CD4-positive, alpha-beta memory T cell (primary cell): ENCODE measurements at regions of chr1 and their contacts with region 1.

Region 1: DNA sequence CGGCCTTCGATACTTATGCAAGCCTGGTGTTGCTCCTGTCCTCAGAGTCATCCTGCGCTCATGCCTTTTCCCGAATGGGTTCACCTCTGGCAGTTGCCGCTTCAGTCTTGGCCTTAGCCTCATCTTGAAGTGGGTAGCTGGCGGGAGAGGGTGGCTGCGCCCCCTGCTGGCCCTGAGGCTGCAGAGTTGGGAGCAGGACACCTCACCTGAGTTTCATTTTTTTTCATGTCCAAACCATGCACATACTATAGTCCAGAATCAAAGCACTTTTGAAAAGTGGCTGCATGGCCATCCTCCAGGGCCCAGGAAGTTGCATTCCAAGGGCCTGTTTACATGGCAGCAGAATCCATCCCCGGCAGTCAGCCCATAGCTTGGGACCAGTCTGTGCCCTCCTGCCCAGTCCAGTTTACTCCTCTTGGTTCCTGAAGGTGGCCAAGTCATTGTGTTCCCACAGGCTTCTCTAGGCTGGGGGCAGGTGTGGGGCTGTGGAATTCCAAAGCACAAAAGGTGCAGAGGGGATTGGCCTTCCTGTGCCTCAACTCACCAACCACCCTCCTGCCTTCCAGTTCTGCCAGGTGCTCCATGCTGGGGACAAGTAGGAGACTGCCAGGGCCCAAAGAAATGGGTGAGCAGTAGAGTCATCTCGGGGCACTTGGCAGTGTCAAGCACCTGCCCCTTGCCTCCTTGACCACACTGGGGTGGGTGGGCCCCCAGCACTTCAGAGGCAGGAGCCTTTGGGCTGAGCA is 44.0 kb downstream of the YARS1 start:
- DNase-seq: peak; percentile 67 to 72 (median 68)
- H3K4me3 ChIP-seq: no peak overlapping the region
- H3K4me3 Mint-ChIP-seq: peak overlapping the region in 1 of 8 donors; percentile 34
- H3K27ac ChIP-seq: no peak overlapping the region
- H3K27ac Mint-ChIP-seq: peak overlapping the region in 3 of 7 donors; percentile 21 to 64 (median 24)
- H3K4me1 ChIP-seq: peaks cover 9% of the 10 kb centered on the region
- H3K4me1 Mint-ChIP-seq: peaks cover 5 to 16% (median 8%) of the 10 kb centered on the region in 4 donors
- H3K27me3 ChIP-seq: no peaks in the 10 kb centered on the region
- H3K27me3 Mint-ChIP-seq: no peaks in the 10 kb centered on the region

Region 2: GRCh38 chr1:32521165-32521564 is 252.0 kb before region 1 on chr1:
- CTCF ChIA-PET with region 1: interaction called, 57 read pairs
- POLR2A ChIA-PET with region 1: interaction called, 7 read pairs
- intact Hi-C with region 1: no loop called
- DNase-seq: no peak
- H3K4me3 ChIP-seq: no peak overlapping the region
- H3K4me3 Mint-ChIP-seq: peak overlapping the region; percentile 55 to 82 (median 79)
- H3K27ac ChIP-seq: no peak overlapping the region
- H3K27ac Mint-ChIP-seq: no peak overlapping the region
- H3K4me1 ChIP-seq: no peaks in the 10 kb centered on the region
- H3K4me1 Mint-ChIP-seq: peaks cover 0 to 11% (median 1%) of the 10 kb centered on the region in 4 donors
- H3K27me3 ChIP-seq: no peaks in the 10 kb centered on the region
- H3K27me3 Mint-ChIP-seq: peaks cover 5 to 9% of the 10 kb centered on the region in 2 donors

Region 3: DNA sequence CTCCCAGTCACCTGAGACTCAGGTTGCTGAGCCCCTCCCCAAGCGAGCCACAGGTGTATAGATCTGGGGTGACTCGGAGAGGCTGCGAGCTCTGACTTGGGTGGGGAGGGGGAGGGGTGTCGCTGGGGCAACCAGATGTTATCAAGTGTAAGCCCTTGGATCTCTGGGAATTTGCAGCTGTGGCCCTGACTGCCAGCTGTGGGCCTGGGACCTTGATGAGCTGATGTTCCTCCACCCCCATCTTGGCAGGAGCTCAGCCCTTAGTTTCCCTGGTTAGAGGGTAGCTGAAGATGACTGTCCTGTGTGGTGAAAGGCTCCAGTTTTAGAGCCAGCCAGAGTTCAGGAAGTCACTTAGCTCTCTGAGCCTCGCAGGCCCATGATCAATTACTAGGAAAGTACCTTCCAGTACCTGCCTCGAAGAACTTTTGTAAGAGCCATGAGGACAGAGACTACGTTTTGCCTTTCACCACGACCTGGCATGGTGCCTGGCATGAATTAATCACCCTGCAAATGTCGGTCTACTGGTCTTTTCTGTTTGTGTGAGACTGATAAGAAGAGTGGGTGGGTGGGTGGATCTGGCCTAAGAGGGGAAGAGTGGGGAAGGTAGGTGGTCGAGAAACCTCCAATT is 11.8 kb before region 1 on chr1:
- CTCF ChIA-PET with region 1: interaction called, 20 read pairs
- POLR2A ChIA-PET with region 1: no interaction called
- intact Hi-C with region 1: no loop called
- DNase-seq: no peak
- H3K4me3 ChIP-seq: no peak overlapping the region
- H3K4me3 Mint-ChIP-seq: no peak overlapping the region
- H3K27ac ChIP-seq: no peak overlapping the region
- H3K27ac Mint-ChIP-seq: peak overlapping the region in 4 of 7 donors; percentile 11 to 74 (median 38)
- H3K4me1 ChIP-seq: peaks cover 8% of the 10 kb centered on the region
- H3K4me1 Mint-ChIP-seq: peaks cover 9 to 22% (median 15%) of the 10 kb centered on the region in 4 donors
- H3K27me3 ChIP-seq: no peaks in the 10 kb centered on the region
- H3K27me3 Mint-ChIP-seq: no peaks in the 10 kb centered on the region

Region 4: DNA sequence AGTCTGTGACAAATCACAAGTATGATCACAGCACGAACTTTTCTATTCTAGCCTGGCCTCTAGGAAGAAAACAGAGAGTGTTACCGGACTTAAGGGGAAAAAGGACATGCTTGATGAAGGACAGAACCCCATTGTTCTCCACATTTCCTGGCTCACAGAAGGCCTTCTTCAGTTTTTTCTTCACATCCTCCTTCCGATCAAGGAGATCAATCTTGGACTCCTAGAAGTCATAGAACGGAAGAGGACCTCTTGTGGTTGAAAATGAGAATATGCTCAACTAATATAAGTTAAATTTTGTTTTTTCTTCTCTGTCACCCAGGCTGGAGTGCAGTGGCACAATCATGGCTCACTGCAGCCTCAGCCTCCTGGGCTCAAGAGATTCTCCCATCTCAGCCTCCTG is 13.7 kb after region 1 on chr1:
- CTCF ChIA-PET with region 1: interaction called, 29 read pairs
- POLR2A ChIA-PET with region 1: interaction called, 3 read pairs
- intact Hi-C with region 1: no loop called
- DNase-seq: no peak
- H3K4me3 ChIP-seq: no peak overlapping the region
- H3K4me3 Mint-ChIP-seq: no peak overlapping the region
- H3K27ac ChIP-seq: no peak overlapping the region
- H3K27ac Mint-ChIP-seq: peak overlapping the region in 4 of 7 donors; percentile 61 to 79 (median 70)
- H3K4me1 ChIP-seq: no peaks in the 10 kb centered on the region
- H3K4me1 Mint-ChIP-seq: peaks cover 2 to 7% (median 3%) of the 10 kb centered on the region in 4 donors
- H3K27me3 ChIP-seq: no peaks in the 10 kb centered on the region
- H3K27me3 Mint-ChIP-seq: no peaks in the 10 kb centered on the region

Region 5: GRCh38 chr1:32870615-32871363 is 97.6 kb after region 1 on chr1 and contains the start of gene FNDC5:
- CTCF ChIA-PET with region 1: interaction called, 8 read pairs
- POLR2A ChIA-PET with region 1: no interaction called
- intact Hi-C with region 1: loop called (anchors 5 kb)
- DNase-seq: no peak
- H3K4me3 ChIP-seq: no peak within 1 kb of the TSS
- H3K4me3 Mint-ChIP-seq: peak within 1 kb of the TSS; percentile 67 to 77 (median 76)
- H3K27ac ChIP-seq: no peak within 1 kb of the TSS
- H3K27ac Mint-ChIP-seq: peak within 1 kb of the TSS in 1 of 7 donors; percentile 42
- H3K4me1 ChIP-seq: peaks cover 4% of the 10 kb centered on the region
- H3K4me1 Mint-ChIP-seq: peaks cover 10 to 24% (median 17%) of the 10 kb centered on the region in 4 donors
- H3K27me3 ChIP-seq: peaks cover 12% of the 10 kb centered on the region
- H3K27me3 Mint-ChIP-seq: peaks cover 37 to 41% of the 10 kb centered on the region in 2 donors
- total RNA-seq, gene FNDC5: not detected